ENCODE measurements at regions of chr19 and their contacts with region 1.

Region 1: GRCh38 chr19:35748106-35749020 is at the start of gene LIN37:
- DNase-seq: peak; percentile 91 to 100 (median 99)
- ATAC-seq: peak; percentile 83
- H3K4me3 ChIP-seq: peak within 1 kb of the TSS; percentile 95
- H3K4me3 Mint-ChIP-seq: peak within 1 kb of the TSS; percentile 90 to 100 (median 98)
- H3K27ac ChIP-seq: peak within 1 kb of the TSS; percentile 85
- H3K27ac Mint-ChIP-seq: peak within 1 kb of the TSS; percentile 89 to 97 (median 95)
- H3K4me1 ChIP-seq: peaks cover 28 to 30% of the 10 kb centered on the region in 2 donors
- H3K4me1 Mint-ChIP-seq: peaks cover 14 to 56% (median 43%) of the 10 kb centered on the region in 7 donors
- H3K27me3 ChIP-seq: no peaks in the 10 kb centered on the region
- H3K27me3 Mint-ChIP-seq: peaks cover 0 to 2% (median 0%) of the 10 kb centered on the region in 5 donors
- total RNA-seq, gene LIN37: 7.9 to 33.1 (median 18.9) TPM

Region 2: GRCh38 chr19:34677386-34678084 is 1070.8 kb before region 1 on chr19 and contains the start of gene ZNF302:
- CTCF ChIA-PET with region 1: no interaction called
- POLR2A ChIA-PET with region 1: no interaction called
- intact Hi-C with region 1: loop called in 1 of 2 experiments (anchors 5 kb)
- DNase-seq: peak; percentile 87 to 96 (median 94)
- ATAC-seq: peak; percentile 95
- H3K4me3 ChIP-seq: peak within 1 kb of the TSS; percentile 93
- H3K4me3 Mint-ChIP-seq: peak within 1 kb of the TSS; percentile 92 to 99 (median 96)
- H3K27ac ChIP-seq: peak within 1 kb of the TSS; percentile 80
- H3K27ac Mint-ChIP-seq: peak within 1 kb of the TSS; percentile 94 to 100 (median 99)
- H3K4me1 ChIP-seq: peaks cover 14 to 15% of the 10 kb centered on the region in 2 donors
- H3K4me1 Mint-ChIP-seq: peaks cover 20 to 56% (median 35%) of the 10 kb centered on the region in 7 donors
- H3K27me3 ChIP-seq: no peaks in the 10 kb centered on the region
- H3K27me3 Mint-ChIP-seq: peaks cover 9 to 18% (median 12%) of the 10 kb centered on the region in 5 donors
- total RNA-seq, gene ZNF302: 13.6 to 61.4 (median 25.7) TPM

Region 3: GRCh38 chr19:35204799-35205732 is 543.3 kb before region 1 on chr19:
- CTCF ChIA-PET with region 1: interaction called, 11 read pairs
- POLR2A ChIA-PET with region 1: no interaction called
- intact Hi-C with region 1: loop called in 1 of 2 experiments (anchors 2 kb)
- DNase-seq: peak in 3 of 9 donors; percentile 9 to 29 (median 11)
- ATAC-seq: peak; percentile 29
- H3K4me3 ChIP-seq: no peak overlapping the region
- H3K4me3 Mint-ChIP-seq: peak overlapping the region in 9 of 10 donors; percentile 44 to 87 (median 74)
- H3K27ac ChIP-seq: peak overlapping the region; percentile 87
- H3K27ac Mint-ChIP-seq: peak overlapping the region; percentile 93 to 100 (median 99)
- H3K4me1 ChIP-seq: peaks cover 55% of the 10 kb centered on the region in 2 donors
- H3K4me1 Mint-ChIP-seq: peaks cover 36 to 86% (median 81%) of the 10 kb centered on the region in 7 donors
- H3K27me3 ChIP-seq: no peaks in the 10 kb centered on the region
- H3K27me3 Mint-ChIP-seq: no peaks in the 10 kb centered on the region

Region 4: GRCh38 chr19:35648017-35648961 is 100.1 kb before region 1 on chr19 and contains the start of gene COX6B1:
- CTCF ChIA-PET with region 1: no interaction called
- POLR2A ChIA-PET with region 1: interaction called, 6 read pairs
- intact Hi-C with region 1: loop called (anchors 1 kb)
- DNase-seq: peak; percentile 63 to 95 (median 91)
- ATAC-seq: peak; percentile 80
- H3K4me3 ChIP-seq: peak within 1 kb of the TSS; percentile 95
- H3K4me3 Mint-ChIP-seq: peak within 1 kb of the TSS; percentile 88 to 99 (median 97)
- H3K27ac ChIP-seq: peak within 1 kb of the TSS; percentile 89
- H3K27ac Mint-ChIP-seq: peak within 1 kb of the TSS; percentile 89 to 98 (median 95)
- H3K4me1 ChIP-seq: peaks cover 7 to 25% of the 10 kb centered on the region in 2 donors
- H3K4me1 Mint-ChIP-seq: peaks cover 17 to 67% (median 42%) of the 10 kb centered on the region in 7 donors
- H3K27me3 ChIP-seq: no peaks in the 10 kb centered on the region
- H3K27me3 Mint-ChIP-seq: no peaks in the 10 kb centered on the region
- total RNA-seq, gene COX6B1: 172 to 464 (median 232) TPM

Region 5: GRCh38 chr19:35702223-35703012 is 45.9 kb before region 1 on chr19:
- CTCF ChIA-PET with region 1: no interaction called
- POLR2A ChIA-PET with region 1: interaction called, 13 read pairs
- intact Hi-C with region 1: loop called in 1 of 2 experiments (anchors 1 kb)
- DNase-seq: peak; percentile 66 to 96 (median 90)
- ATAC-seq: peak; percentile 100
- H3K4me3 ChIP-seq: peak overlapping the region; percentile 85
- H3K4me3 Mint-ChIP-seq: peak overlapping the region; percentile 88 to 100 (median 96)
- H3K27ac ChIP-seq: peak overlapping the region; percentile 66
- H3K27ac Mint-ChIP-seq: peak overlapping the region; percentile 79 to 98 (median 93)
- H3K4me1 ChIP-seq: no peaks in the 10 kb centered on the region
- H3K4me1 Mint-ChIP-seq: peaks cover 5 to 22% (median 6%) of the 10 kb centered on the region in 7 donors
- H3K27me3 ChIP-seq: no peaks in the 10 kb centered on the region
- H3K27me3 Mint-ChIP-seq: peaks cover 0 to 4% (median 0%) of the 10 kb centered on the region in 5 donors

Region 6: GRCh38 chr19:35899547-35900214 is 151.3 kb after region 1 on chr19:
- CTCF ChIA-PET with region 1: no interaction called
- POLR2A ChIA-PET with region 1: interaction called, 3 read pairs
- intact Hi-C with region 1: loop called in 1 of 2 experiments (anchors 1 kb)
- DNase-seq: peak; percentile 74 to 94 (median 87)
- ATAC-seq: peak; percentile 74
- H3K4me3 ChIP-seq: peak overlapping the region; percentile 94
- H3K4me3 Mint-ChIP-seq: peak overlapping the region; percentile 83 to 100 (median 95)
- H3K27ac ChIP-seq: peak overlapping the region; percentile 100
- H3K27ac Mint-ChIP-seq: peak overlapping the region; percentile 92 to 97 (median 96)
- H3K4me1 ChIP-seq: peaks cover 35 to 43% of the 10 kb centered on the region in 2 donors
- H3K4me1 Mint-ChIP-seq: peaks cover 34 to 65% (median 46%) of the 10 kb centered on the region in 7 donors
- H3K27me3 ChIP-seq: no peaks in the 10 kb centered on the region
- H3K27me3 Mint-ChIP-seq: no peaks in the 10 kb centered on the region

Region 7: GRCh38 chr19:36114763-36115452 is 366.5 kb after region 1 on chr19 and contains the start of gene POLR2I:
- CTCF ChIA-PET with region 1: no interaction called
- POLR2A ChIA-PET with region 1: interaction called, 3 read pairs
- intact Hi-C with region 1: loop called (anchors 1 to 2 kb)
- DNase-seq: peak; percentile 95 to 100 (median 99)
- ATAC-seq: peak; percentile 92
- H3K4me3 ChIP-seq: peak within 1 kb of the TSS; percentile 97
- H3K4me3 Mint-ChIP-seq: peak within 1 kb of the TSS; percentile 89 to 98 (median 96)
- H3K27ac ChIP-seq: peak within 1 kb of the TSS; percentile 90
- H3K27ac Mint-ChIP-seq: peak within 1 kb of the TSS; percentile 97 to 99 (median 98)
- H3K4me1 ChIP-seq: peaks cover 14 to 15% of the 10 kb centered on the region in 2 donors
- H3K4me1 Mint-ChIP-seq: peaks cover 27 to 54% (median 42%) of the 10 kb centered on the region in 7 donors
- H3K27me3 ChIP-seq: no peaks in the 10 kb centered on the region
- H3K27me3 Mint-ChIP-seq: peaks cover 0 to 5% (median 0%) of the 10 kb centered on the region in 5 donors
- total RNA-seq, gene POLR2I: 20.9 to 56.7 (median 44.7) TPM